ENCODE measurements at regions of chr6 and their contacts with region 1.

Region 1: DNA sequence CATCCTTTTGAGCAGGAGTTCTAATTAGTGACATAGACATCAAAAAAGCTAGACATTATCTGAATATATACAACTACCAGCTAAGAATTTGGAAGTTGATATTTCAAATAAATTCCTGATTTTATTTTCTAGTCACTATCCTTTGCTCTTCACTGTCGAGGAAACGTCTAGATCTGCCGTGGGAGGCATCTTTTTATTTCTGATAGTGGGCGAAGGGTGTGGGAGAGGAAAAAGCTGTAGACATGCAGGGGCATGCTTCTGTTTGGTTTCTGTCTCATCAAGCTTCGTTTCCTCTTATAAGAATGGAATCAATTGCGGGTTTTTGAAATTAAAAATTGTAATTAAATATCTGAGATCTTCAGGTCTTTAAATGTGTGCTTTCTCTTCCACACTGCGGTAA is 16.2 kb upstream of the C6orf118 start:
- DNase-seq: no peak
- ATAC-seq: no peak
- H3K4me3 ChIP-seq: no peak overlapping the region
- H3K4me1 ChIP-seq: no peaks in the 10 kb centered on the region
- CTCF ChIP-seq: no peak

Region 2: DNA sequence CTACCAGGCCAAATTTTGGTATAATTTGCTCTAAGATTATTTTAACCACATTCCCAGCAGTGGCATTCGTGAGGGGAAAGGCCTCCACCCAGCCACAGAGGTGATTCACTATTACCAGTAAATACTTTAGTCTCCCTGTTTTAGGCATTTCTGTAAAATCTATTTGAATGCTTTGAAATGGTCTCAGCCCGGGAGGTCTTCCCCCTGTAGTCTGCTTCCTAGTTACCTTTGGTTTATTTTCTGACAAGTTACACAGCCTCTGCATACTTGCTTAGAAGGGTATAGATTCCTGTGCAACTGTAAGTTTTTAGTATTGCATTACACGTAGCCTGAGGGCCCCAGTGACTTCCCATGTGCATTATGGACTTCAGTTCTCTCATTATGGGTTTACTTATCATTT is 264.9 kb before region 1 on chr6:
- intact Hi-C with region 1: loop called in 1 of 2 experiments (anchors 5 kb)
- DNase-seq: no peak
- ATAC-seq: no peak
- H3K4me3 ChIP-seq: no peak overlapping the region
- H3K4me1 ChIP-seq: no peaks in the 10 kb centered on the region
- CTCF ChIP-seq: no peak

Region 3: GRCh38 chr6:165426892-165427291 is 101.3 kb after region 1 on chr6:
- intact Hi-C with region 1: no loop called
- DNase-seq: no peak
- ATAC-seq: no peak
- H3K4me3 ChIP-seq: no peak overlapping the region
- H3K4me1 ChIP-seq: no peaks in the 10 kb centered on the region
- CTCF ChIP-seq: no peak